ENCODE measurements at regions of chr4 and their contacts with region 1.

Region 1: GRCh38 chr4:149370785-149371420 is 444.7 kb downstream of the IQCM start:
- DNase-seq: no peak

Region 2: GRCh38 chr4:149549911-149550310 is 179.0 kb after region 1 on chr4:
- intact Hi-C with region 1: loop called (anchors 1 kb)
- DNase-seq: no peak

Region 3: DNA sequence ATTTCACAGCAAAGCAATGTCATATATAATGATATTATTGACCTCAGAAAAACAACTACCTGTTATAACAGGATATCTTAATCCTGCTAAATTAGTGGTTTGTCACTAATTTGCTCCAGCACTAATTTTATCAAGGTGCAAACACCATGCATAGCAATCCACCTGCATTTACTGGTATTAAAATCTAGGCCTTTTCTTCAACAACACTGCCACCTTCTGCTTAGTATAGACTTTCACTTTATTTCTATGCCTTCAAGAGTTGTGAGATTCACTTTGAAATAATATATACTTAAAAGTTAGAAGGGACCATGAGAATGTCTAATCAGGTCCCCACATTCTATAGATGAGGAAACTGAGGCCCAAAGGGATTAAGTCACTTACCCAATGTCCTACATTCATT is 526.9 kb after region 1 on chr4:
- intact Hi-C with region 1: loop called (anchors 2 kb)
- DNase-seq: no peak

Region 4: GRCh38 chr4:149972407-149972806 is 601.5 kb after region 1 on chr4:
- intact Hi-C with region 1: no loop called
- DNase-seq: no peak

Measured in cardiac septum (tissue), 1 donor.